ENCODE measurements at regions of chr9 and their contacts with region 1.

Region 1: GRCh38 chr9:115117999-115118878 is at the start of gene TNC:
- DNase-seq: peak; percentile 81
- ATAC-seq: peak; percentile 55
- H3K4me3 ChIP-seq: peak within 1 kb of the TSS; percentile 75
- H3K27ac ChIP-seq: peak within 1 kb of the TSS; percentile 90
- H3K4me1 ChIP-seq: peaks cover 62% of the 10 kb centered on the region
- H3K27me3 ChIP-seq: no peaks in the 10 kb centered on the region
- CTCF ChIP-seq: no peak
- total RNA-seq, gene TNC: 60.1 and 71.0 TPM in 2 replicates

Region 2: GRCh38 chr9:115146581-115147021 is 28.4 kb after region 1 on chr9:
- CTCF ChIA-PET with region 1: no interaction called
- POLR2A ChIA-PET with region 1: no interaction called
- intact Hi-C with region 1: no loop called
- DNase-seq: peak; percentile 81
- ATAC-seq: peak; percentile 88
- H3K4me3 ChIP-seq: no peak overlapping the region
- H3K27ac ChIP-seq: peak overlapping the region; percentile 53
- H3K4me1 ChIP-seq: peaks cover 15% of the 10 kb centered on the region
- H3K27me3 ChIP-seq: no peaks in the 10 kb centered on the region
- CTCF ChIP-seq: no peak

Region 3: GRCh38 chr9:115157245-115157674 is 39.0 kb after region 1 on chr9:
- CTCF ChIA-PET with region 1: no interaction called
- POLR2A ChIA-PET with region 1: no interaction called
- intact Hi-C with region 1: loop called (anchors 2 kb)
- DNase-seq: peak; percentile 77
- ATAC-seq: peak; percentile 79
- H3K4me3 ChIP-seq: no peak overlapping the region
- H3K27ac ChIP-seq: peak overlapping the region; percentile 59
- H3K4me1 ChIP-seq: peaks cover 20% of the 10 kb centered on the region
- H3K27me3 ChIP-seq: no peaks in the 10 kb centered on the region
- CTCF ChIP-seq: no peak

Region 4: GRCh38 chr9:115204904-115205453 is 86.7 kb after region 1 on chr9:
- CTCF ChIA-PET with region 1: no interaction called
- POLR2A ChIA-PET with region 1: no interaction called
- intact Hi-C with region 1: loop called (anchors 5 kb)
- DNase-seq: peak; percentile 74
- ATAC-seq: peak; percentile 94
- H3K4me3 ChIP-seq: no peak overlapping the region
- H3K27ac ChIP-seq: 0 out of 2 replicates have a peak overlapping the region, but pooled peaks have one; percentile 30
- H3K4me1 ChIP-seq: peaks cover 46% of the 10 kb centered on the region
- H3K27me3 ChIP-seq: no peaks in the 10 kb centered on the region
- CTCF ChIP-seq: no peak

Region 5: GRCh38 chr9:115349526-115349925 is 231.3 kb after region 1 on chr9:
- CTCF ChIA-PET with region 1: no interaction called
- POLR2A ChIA-PET with region 1: no interaction called
- intact Hi-C with region 1: loop called (anchors 2 kb)
- DNase-seq: peak; percentile 85
- ATAC-seq: peak; percentile 86
- H3K4me3 ChIP-seq: no peak overlapping the region
- H3K27ac ChIP-seq: peak overlapping the region; percentile 65
- H3K4me1 ChIP-seq: peaks cover 33% of the 10 kb centered on the region
- H3K27me3 ChIP-seq: no peaks in the 10 kb centered on the region
- CTCF ChIP-seq: no peak

Region 6: GRCh38 chr9:115373000-115373709 is 254.9 kb after region 1 on chr9:
- CTCF ChIA-PET with region 1: no interaction called
- POLR2A ChIA-PET with region 1: no interaction called
- intact Hi-C with region 1: loop called (anchors 10 kb)
- DNase-seq: peak; percentile 96
- ATAC-seq: peak; percentile 95
- H3K4me3 ChIP-seq: peak overlapping the region; percentile 47; the same call in 1 of the 2 replicates
- H3K27ac ChIP-seq: peak overlapping the region; percentile 96
- H3K4me1 ChIP-seq: peaks cover 31% of the 10 kb centered on the region
- H3K27me3 ChIP-seq: no peaks in the 10 kb centered on the region
- CTCF ChIP-seq: no peak

Region 7: GRCh38 chr9:115495052-115495635 is 376.9 kb after region 1 on chr9:
- CTCF ChIA-PET with region 1: no interaction called
- POLR2A ChIA-PET with region 1: no interaction called
- intact Hi-C with region 1: loop called (anchors 5 kb)
- DNase-seq: peak; percentile 80
- ATAC-seq: peak; percentile 42
- H3K4me3 ChIP-seq: 0 out of 2 replicates have a peak overlapping the region, but pooled peaks have one; percentile 2
- H3K27ac ChIP-seq: peak overlapping the region; percentile 77
- H3K4me1 ChIP-seq: peaks cover 43% of the 10 kb centered on the region
- H3K27me3 ChIP-seq: no peaks in the 10 kb centered on the region
- CTCF ChIP-seq: no peak